Heart left ventricle (tissue), 16 donors: ENCODE measurements at regions of chr4 and their contacts with region 1.

Region 1: DNA sequence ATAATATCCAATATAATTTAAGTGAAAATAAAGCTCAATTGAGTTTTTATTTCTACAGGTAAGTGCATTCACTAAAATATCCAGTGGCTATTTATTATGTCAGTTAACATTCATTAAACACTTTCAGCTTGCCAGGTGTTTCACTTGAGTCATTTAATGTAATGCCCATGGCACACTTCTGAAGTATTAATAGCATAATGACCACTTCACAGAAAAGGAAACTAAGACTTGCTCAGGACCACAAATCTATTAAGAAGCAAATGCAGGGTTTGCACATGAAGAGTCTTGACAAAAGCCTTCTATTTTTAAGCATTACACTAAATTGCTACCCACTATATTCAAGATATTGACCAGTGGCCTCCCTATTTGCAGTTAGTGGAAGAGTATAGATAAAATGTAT is 612.7 kb downstream of the KCTD8 start:
- DNase-seq: no peak
- ATAC-seq: no peak
- H3K4me3 ChIP-seq: no peak overlapping the region
- H3K27ac ChIP-seq: no peak overlapping the region
- H3K4me1 ChIP-seq: no peaks in the 10 kb centered on the region
- H3K27me3 ChIP-seq: no peaks in the 10 kb centered on the region
- CTCF ChIP-seq: no peak
- POLR2A ChIP-seq: no peak

Region 2: DNA sequence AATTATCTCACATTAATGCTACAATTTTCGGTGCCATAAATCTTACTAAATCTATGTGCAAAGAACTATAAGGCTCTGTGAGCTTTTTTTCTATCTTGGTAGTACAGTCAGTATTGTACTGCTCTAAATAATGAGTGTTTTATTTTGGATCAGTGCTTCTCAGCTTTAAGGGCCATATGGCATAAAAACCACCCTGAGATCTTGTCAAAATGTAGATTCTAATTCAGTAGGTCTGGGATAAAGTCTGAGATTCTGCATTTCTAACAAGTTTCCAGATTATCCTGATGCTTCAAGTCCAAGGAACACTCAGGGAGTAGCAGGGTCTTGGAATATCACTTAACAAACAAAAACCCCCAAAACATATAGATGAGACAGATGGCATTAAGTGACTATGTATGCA is 456.9 kb before region 1 on chr4:
- intact Hi-C with region 1: no loop called
- DNase-seq: no peak
- ATAC-seq: no peak
- H3K4me3 ChIP-seq: no peak overlapping the region
- H3K27ac ChIP-seq: no peak overlapping the region
- H3K4me1 ChIP-seq: no peaks in the 10 kb centered on the region
- H3K27me3 ChIP-seq: no peaks in the 10 kb centered on the region
- CTCF ChIP-seq: no peak
- POLR2A ChIP-seq: no peak

Region 3: GRCh38 chr4:43587758-43588157 is 248.1 kb before region 1 on chr4:
- intact Hi-C with region 1: no loop called
- DNase-seq: no peak
- ATAC-seq: no peak
- H3K4me3 ChIP-seq: no peak overlapping the region
- H3K27ac ChIP-seq: no peak overlapping the region
- H3K4me1 ChIP-seq: no peaks in the 10 kb centered on the region
- H3K27me3 ChIP-seq: no peaks in the 10 kb centered on the region
- CTCF ChIP-seq: no peak
- POLR2A ChIP-seq: no peak

Region 4: GRCh38 chr4:43816116-43816515 is 19.8 kb before region 1 on chr4:
- intact Hi-C with region 1: no loop called
- DNase-seq: no peak
- ATAC-seq: no peak
- H3K4me3 ChIP-seq: no peak overlapping the region
- H3K27ac ChIP-seq: no peak overlapping the region
- H3K4me1 ChIP-seq: no peaks in the 10 kb centered on the region
- H3K27me3 ChIP-seq: no peaks in the 10 kb centered on the region
- CTCF ChIP-seq: no peak
- POLR2A ChIP-seq: no peak

Region 5: GRCh38 chr4:43943998-43944397 is 108.1 kb after region 1 on chr4:
- intact Hi-C with region 1: no loop called
- DNase-seq: no peak
- ATAC-seq: no peak
- H3K4me3 ChIP-seq: no peak overlapping the region
- H3K27ac ChIP-seq: no peak overlapping the region
- H3K4me1 ChIP-seq: no peaks in the 10 kb centered on the region
- H3K27me3 ChIP-seq: no peaks in the 10 kb centered on the region
- CTCF ChIP-seq: no peak
- POLR2A ChIP-seq: no peak

Region 6: DNA sequence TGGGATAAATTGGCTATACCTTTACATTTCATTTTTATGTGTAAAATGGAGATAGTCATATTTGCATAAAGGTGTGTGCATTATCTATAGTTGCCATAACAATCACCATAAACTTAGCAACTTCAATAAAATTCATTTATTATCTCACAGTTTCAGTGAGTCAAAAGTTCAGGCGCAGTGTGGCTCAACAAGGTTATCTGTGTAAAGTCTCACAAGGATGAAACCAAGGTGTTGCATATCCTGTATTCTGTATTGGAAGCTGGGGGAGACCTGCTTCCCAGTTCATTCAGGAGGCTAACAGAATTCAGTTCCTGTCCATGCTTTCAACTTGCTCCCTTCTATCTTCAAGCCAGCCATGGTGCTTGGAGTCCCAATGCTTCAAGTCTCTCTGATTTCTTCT is 443.2 kb after region 1 on chr4:
- intact Hi-C with region 1: loop called in 1 of 10 experiments (anchors 10 kb)
- DNase-seq: no peak
- ATAC-seq: no peak
- H3K4me3 ChIP-seq: no peak overlapping the region
- H3K27ac ChIP-seq: no peak overlapping the region
- H3K4me1 ChIP-seq: no peaks in the 10 kb centered on the region
- H3K27me3 ChIP-seq: no peaks in the 10 kb centered on the region
- CTCF ChIP-seq: no peak
- POLR2A ChIP-seq: no peak